Gastrocnemius medialis (tissue), 4 donors: ENCODE measurements at regions of chr17 and their contacts with region 1.

Region 1: GRCh38 chr17:56592487-56593085 is 913 bp upstream of the NOG start:
- DNase-seq: peak; percentile 14 to 46
- ATAC-seq: peak; percentile 49 to 60
- H3K4me3 ChIP-seq: peak overlapping the region; percentile 58 to 89 (median 70)
- H3K27ac ChIP-seq: peak overlapping the region; percentile 82 to 93 (median 83)
- H3K4me1 ChIP-seq: peaks cover 10 to 27% of the 10 kb centered on the region in 2 donors
- H3K27me3 ChIP-seq: peaks cover 0 to 4% (median 3%) of the 10 kb centered on the region in 3 donors
- CTCF ChIP-seq: peak; percentile 81 to 100 (median 96)
- POLR2A ChIP-seq: no peak

Region 2: GRCh38 chr17:55264645-55265298 is 1327.8 kb before region 1 on chr17 and contains the start of gene HLF:
- in situ Hi-C with region 1: no loop called
- intact Hi-C with region 1: loop called (anchors 10 kb)
- DNase-seq: peak; percentile 59 to 72
- ATAC-seq: peak; percentile 85
- H3K4me3 ChIP-seq: peak within 1 kb of the TSS; percentile 66 to 88 (median 72)
- H3K27ac ChIP-seq: peak within 1 kb of the TSS; percentile 78 to 92 (median 78)
- H3K4me1 ChIP-seq: peaks cover 19 to 29% of the 10 kb centered on the region in 2 donors
- H3K27me3 ChIP-seq: no peaks in the 10 kb centered on the region
- CTCF ChIP-seq: peak in 2 of 5 experiments; percentile 8 to 19
- POLR2A ChIP-seq: peak; percentile 79 to 82
- total RNA-seq, gene HLF: 7.7 to 14.8 (median 10.4) TPM

Region 3: GRCh38 chr17:56222255-56222654 is 370.3 kb before region 1 on chr17:
- in situ Hi-C with region 1: no loop called
- intact Hi-C with region 1: no loop called
- DNase-seq: no peak
- ATAC-seq: no peak
- H3K4me3 ChIP-seq: no peak overlapping the region
- H3K27ac ChIP-seq: no peak overlapping the region
- H3K4me1 ChIP-seq: no peaks in the 10 kb centered on the region
- H3K27me3 ChIP-seq: no peaks in the 10 kb centered on the region
- CTCF ChIP-seq: no peak
- POLR2A ChIP-seq: no peak

Region 4: DNA sequence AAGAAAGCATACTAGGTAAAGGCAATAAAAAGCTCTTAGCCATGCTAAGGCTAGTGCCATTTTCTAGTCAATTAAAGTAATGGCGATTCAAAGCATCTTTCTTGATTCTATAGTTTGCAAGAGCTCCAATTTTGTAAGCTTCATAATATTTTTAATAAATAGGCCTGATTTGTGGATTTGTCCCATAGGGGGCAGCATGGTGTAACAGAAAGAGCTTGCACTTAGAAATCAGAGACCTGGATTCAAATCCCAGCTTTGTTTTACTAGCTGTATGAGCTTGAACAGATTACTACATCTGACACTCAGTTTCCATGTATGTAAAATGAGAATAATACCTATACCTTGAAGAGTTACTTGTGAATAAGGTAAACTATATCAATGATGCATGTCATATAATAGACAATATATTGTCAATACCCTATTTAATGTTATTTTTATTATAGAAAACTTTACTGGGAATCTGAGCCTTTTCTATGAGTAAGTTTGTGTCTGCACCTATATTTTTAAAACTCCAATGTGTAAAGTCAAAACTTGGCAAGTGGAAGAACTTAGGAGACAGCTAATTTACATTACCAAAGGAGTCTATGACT is 92.7 kb before region 1 on chr17:
- in situ Hi-C with region 1: no loop called
- intact Hi-C with region 1: loop called (anchors 2 kb)
- DNase-seq: no peak
- ATAC-seq: peak in 1 of 2 donors; percentile 48
- H3K4me3 ChIP-seq: no peak overlapping the region
- H3K27ac ChIP-seq: no peak overlapping the region
- H3K4me1 ChIP-seq: peaks cover 13 to 17% of the 10 kb centered on the region in 2 donors
- H3K27me3 ChIP-seq: no peaks in the 10 kb centered on the region
- CTCF ChIP-seq: peak; percentile 32 to 63 (median 48)
- POLR2A ChIP-seq: no peak

Region 5: DNA sequence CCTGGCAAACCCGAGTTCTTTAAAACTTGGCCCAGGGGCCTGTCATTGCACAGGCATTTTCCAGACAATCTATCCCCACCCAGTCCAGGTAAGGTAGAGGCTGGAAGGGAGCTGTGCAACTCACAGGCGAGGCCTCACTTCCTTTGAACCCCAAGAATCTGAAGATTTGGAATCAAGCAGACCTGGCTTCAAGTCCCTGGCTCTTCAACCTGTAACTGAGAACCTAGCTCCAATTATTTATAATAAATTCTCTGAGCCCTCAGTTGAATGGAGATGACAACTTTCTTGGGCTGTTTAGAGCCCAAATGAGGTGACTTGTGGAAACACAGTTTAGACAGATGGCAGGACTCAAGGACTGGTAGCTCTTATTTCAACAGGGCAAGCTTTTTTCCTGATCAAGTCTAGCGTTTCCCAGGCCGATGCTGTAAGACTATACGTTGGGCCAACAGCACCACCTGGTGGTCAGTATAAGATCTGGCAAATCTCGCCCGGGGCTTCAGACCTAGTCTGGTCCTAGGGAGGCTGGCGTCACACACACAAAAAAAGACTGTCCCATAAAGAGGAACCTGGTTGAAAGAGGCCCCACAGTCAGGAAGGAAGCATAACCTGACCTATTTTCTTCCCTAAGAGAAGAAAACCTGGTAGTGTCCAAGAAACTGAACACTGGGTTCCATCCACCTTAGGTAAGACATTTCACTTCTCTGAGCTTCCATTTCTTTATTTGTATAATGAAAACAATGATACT is 123.2 kb after region 1 on chr17:
- in situ Hi-C with region 1: loop called in 3 of 4 experiments (anchors 5 to 10 kb)
- intact Hi-C with region 1: loop called (anchors 1 kb)
- DNase-seq: peak; percentile 55 to 68
- ATAC-seq: peak; percentile 89 to 98
- H3K4me3 ChIP-seq: no peak overlapping the region
- H3K27ac ChIP-seq: no peak overlapping the region
- H3K4me1 ChIP-seq: no peaks in the 10 kb centered on the region
- H3K27me3 ChIP-seq: no peaks in the 10 kb centered on the region
- CTCF ChIP-seq: peak; percentile 69 to 87 (median 84)
- POLR2A ChIP-seq: no peak

Region 6: GRCh38 chr17:56913864-56914640 is 321.5 kb after region 1 on chr17 and contains the start of gene TRIM25:
- in situ Hi-C with region 1: no loop called
- intact Hi-C with region 1: loop called (anchors 5 kb)
- DNase-seq: peak; percentile 92 to 93
- ATAC-seq: peak; percentile 78 to 84
- H3K4me3 ChIP-seq: peak within 1 kb of the TSS; percentile 68 to 87 (median 74)
- H3K27ac ChIP-seq: peak within 1 kb of the TSS; percentile 85 to 95 (median 87)
- H3K4me1 ChIP-seq: peaks cover 53 to 54% of the 10 kb centered on the region in 2 donors
- H3K27me3 ChIP-seq: no peaks in the 10 kb centered on the region
- CTCF ChIP-seq: no peak
- POLR2A ChIP-seq: peak; percentile 98 to 99
- total RNA-seq, gene TRIM25: 8.5 to 18.2 (median 15.1) TPM

Region 7: DNA sequence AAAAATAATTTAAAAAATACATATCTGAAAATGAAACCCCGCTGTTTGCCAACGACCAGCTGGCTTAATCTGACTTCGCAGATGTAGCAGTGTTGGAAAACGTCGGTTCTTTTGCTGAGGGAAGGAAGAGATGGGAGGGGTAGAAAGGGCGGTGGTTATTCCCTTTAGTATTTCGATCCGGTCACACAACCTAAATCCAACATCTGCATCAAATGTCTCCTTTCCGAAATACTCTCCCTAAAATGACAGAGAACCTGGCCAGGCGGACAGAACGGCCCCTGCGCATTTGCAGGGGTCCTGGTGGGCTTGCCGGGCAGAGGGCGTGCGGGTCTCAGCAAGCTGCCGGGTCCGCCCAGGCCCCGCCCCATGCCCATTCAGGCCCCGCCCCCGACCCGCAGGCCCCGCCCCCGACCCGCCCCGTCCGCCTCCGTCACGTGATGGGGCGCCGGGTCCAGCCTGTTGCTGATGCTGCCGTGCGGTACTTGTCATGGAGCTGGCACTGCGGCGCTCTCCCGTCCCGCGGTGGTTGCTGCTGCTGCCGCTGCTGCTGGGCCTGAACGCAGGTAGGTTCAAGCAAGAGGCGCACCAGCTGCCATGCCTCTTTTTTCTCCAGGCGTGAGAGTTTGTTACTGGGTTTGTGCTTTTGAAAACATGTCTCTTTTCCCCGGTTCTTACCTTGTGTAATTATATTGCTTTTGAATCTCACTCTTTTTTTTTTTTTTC is 385.2 kb after region 1 on chr17 and contains the start of gene SCPEP1:
- in situ Hi-C with region 1: loop called in 1 of 4 experiments (anchors 25 kb)
- intact Hi-C with region 1: loop called (anchors 10 kb)
- DNase-seq: peak; percentile 86 to 87
- ATAC-seq: peak; percentile 89 to 92
- H3K4me3 ChIP-seq: peak within 1 kb of the TSS; percentile 65 to 79 (median 75)
- H3K27ac ChIP-seq: peak within 1 kb of the TSS; percentile 67 to 84 (median 76)
- H3K4me1 ChIP-seq: peaks cover 12% of the 10 kb centered on the region in 2 donors
- H3K27me3 ChIP-seq: no peaks in the 10 kb centered on the region
- CTCF ChIP-seq: no peak
- POLR2A ChIP-seq: peak; percentile 47 to 65
- total RNA-seq, gene SCPEP1: 9.9 to 44.7 (median 30.2) TPM